OCI-LY7 (cell line): ENCODE measurements at regions of chr12 and their contacts with region 1.

Region 1: DNA sequence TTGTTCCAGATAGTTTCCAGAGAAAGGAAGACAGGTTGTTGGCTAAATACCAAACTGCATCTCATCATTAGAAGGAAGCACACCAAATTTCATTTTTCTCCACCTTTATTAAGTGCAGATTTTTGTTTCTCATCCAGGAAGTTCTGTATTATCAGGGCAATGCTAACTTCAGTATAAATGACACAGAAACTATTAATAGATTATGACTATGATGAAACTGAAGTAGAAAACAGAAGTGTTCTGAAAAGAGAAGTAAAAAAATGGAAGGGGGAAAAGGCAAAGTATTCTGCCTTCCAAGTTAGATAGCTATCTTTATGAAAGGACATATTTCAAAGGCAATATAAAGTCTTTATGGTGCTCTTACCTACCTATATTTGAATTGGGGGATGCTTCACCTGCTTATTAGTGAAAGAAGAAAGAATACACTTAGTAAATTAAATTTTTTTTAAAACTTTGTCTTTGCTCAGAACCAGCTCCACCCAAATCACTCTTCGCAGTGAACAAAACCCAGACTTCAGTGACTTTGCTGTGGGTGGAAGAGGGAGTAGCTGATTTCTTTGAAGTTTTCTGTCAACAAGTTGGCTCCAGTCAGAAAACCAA is 223.9 kb downstream of the PTPRO start:
- DNase-seq: peak; percentile 15
- H3K4me3 ChIP-seq: no peak overlapping the region
- H3K27ac ChIP-seq: no peak overlapping the region
- H3K4me1 ChIP-seq: peaks cover 18% of the 10 kb centered on the region
- CTCF ChIP-seq: no peak

Region 2: DNA sequence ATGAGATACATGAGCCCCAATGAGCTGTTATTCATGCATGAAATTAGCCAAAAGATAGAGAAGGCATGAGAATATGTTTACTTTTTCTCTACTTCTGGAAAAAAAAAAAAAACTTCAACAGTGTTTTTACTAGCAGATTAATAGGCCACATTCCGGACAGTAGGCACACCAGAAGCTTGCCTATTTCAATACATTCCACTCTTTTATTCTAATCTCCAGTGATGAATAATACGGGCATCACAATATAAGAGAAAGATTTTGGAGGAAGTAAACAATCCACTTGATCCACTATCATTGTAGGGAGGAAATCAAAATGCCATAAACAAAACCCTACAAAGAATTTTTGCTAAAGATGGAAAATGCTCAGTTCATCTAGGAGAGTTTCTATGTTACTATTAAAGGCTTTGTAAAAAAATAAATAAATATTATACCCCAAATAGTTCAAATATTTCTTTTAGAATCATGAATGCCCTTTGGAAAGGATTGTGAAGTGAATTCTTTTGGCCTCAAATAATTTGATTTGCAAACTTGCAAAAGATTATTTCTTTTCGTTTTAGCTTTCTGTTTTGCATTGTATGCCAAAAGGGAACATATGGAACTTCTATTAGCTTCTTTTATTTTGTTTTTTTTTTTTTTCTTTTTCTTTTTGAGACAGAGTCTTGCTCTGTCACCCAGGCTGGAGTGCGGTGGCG is 10.4 kb after region 1 on chr12:
- CTCF ChIA-PET with region 1: no interaction called
- POLR2A ChIA-PET with region 1: interaction called, 15 read pairs
- intact Hi-C with region 1: no loop called
- DNase-seq: no peak
- H3K4me3 ChIP-seq: no peak overlapping the region
- H3K27ac ChIP-seq: no peak overlapping the region
- H3K4me1 ChIP-seq: no peaks in the 10 kb centered on the region
- CTCF ChIP-seq: no peak

Region 3: GRCh38 chr12:15563663-15564062 is 17.5 kb after region 1 on chr12:
- CTCF ChIA-PET with region 1: no interaction called
- POLR2A ChIA-PET with region 1: interaction called, 30 read pairs
- intact Hi-C with region 1: no loop called
- DNase-seq: no peak
- H3K4me3 ChIP-seq: no peak overlapping the region
- H3K27ac ChIP-seq: no peak overlapping the region
- H3K4me1 ChIP-seq: peaks cover 6% of the 10 kb centered on the region
- CTCF ChIP-seq: no peak

Region 4: GRCh38 chr12:15575671-15576541 is 29.7 kb after region 1 on chr12:
- CTCF ChIA-PET with region 1: no interaction called
- POLR2A ChIA-PET with region 1: interaction called, 30 read pairs
- intact Hi-C with region 1: no loop called
- DNase-seq: no peak
- H3K4me3 ChIP-seq: no peak overlapping the region
- H3K27ac ChIP-seq: no peak overlapping the region
- H3K4me1 ChIP-seq: peaks cover 10% of the 10 kb centered on the region
- CTCF ChIP-seq: no peak